Right cardiac atrium (tissue), 5 donors: ENCODE measurements at regions of chr6 and their contacts with region 1.

Region 1: GRCh38 chr6:79672631-79673111 is 41.5 kb downstream of the SH3BGRL2 start:
- DNase-seq: no peak
- ATAC-seq: peak in 1 of 2 donors; percentile 24
- H3K4me3 ChIP-seq: no peak overlapping the region
- H3K27ac ChIP-seq: no peak overlapping the region
- H3K4me1 ChIP-seq: peaks cover 2% of the 10 kb centered on the region
- H3K27me3 ChIP-seq: no peaks in the 10 kb centered on the region

Region 2: GRCh38 chr6:79453558-79454042 is 219.1 kb before region 1 on chr6:
- intact Hi-C with region 1: no loop called
- DNase-seq: no peak
- ATAC-seq: peak; percentile 65 to 68
- H3K4me3 ChIP-seq: no peak overlapping the region
- H3K27ac ChIP-seq: no peak overlapping the region
- H3K4me1 ChIP-seq: no peaks in the 10 kb centered on the region
- H3K27me3 ChIP-seq: no peaks in the 10 kb centered on the region

Region 3: GRCh38 chr6:79564636-79565035 is 108.0 kb before region 1 on chr6:
- intact Hi-C with region 1: loop called in 2 of 4 experiments (anchors 10 kb)
- DNase-seq: no peak
- ATAC-seq: no peak
- H3K4me3 ChIP-seq: no peak overlapping the region
- H3K27ac ChIP-seq: no peak overlapping the region
- H3K4me1 ChIP-seq: no peaks in the 10 kb centered on the region
- H3K27me3 ChIP-seq: no peaks in the 10 kb centered on the region

Region 4: DNA sequence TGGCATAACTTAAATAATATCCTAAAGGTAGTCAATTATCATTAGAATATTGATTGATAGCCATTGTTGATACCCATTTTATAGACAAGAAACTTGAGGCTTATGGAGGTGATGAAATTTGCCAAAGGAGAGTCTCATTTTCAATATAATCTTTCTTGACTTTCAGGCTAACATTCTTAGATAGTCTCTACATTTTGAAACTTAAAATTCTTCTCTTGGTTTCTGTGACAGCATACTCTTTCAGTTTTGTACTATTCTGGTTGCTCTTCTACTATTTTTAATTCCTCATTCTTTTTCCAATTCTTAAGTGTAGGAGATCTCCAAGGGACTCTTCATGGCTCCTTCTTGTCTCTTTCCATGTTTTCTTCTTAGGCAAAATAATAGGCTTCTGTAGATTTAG is 45.2 kb before region 1 on chr6:
- intact Hi-C with region 1: loop called in 1 of 4 experiments (anchors 10 kb)
- DNase-seq: no peak
- ATAC-seq: no peak
- H3K4me3 ChIP-seq: no peak overlapping the region
- H3K27ac ChIP-seq: no peak overlapping the region
- H3K4me1 ChIP-seq: no peaks in the 10 kb centered on the region
- H3K27me3 ChIP-seq: no peaks in the 10 kb centered on the region

Region 5: DNA sequence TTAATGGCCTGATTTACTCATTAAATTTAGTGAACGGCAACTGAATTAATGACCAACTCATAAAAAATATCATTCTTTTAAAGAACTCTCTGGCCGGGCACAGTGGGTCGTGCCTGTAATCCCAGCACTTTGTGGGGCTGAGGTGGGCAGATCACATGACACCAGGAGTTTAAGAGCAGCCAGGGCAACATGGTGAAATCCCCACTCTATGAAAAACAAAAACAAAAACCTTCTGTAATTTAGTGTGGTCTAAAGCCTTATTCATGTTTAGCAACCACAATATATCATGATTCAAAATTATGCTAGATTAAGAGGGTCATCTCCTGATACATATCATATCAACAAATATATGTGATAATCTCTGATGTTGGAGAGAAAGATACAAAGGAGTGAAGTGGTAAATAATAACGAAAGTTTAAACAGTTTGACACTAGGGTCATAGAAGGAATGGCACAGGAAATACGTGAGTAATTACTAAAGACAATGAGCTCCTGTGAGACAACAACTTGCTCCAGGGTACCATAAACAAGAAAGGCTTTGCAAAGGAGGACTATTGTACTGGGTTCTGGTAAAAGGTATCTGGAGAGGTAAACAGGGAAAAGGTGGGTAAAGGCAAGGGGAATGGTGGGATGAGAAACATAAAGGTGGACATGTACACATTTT is 268.9 kb after region 1 on chr6:
- intact Hi-C with region 1: no loop called
- DNase-seq: no peak
- ATAC-seq: no peak
- H3K4me3 ChIP-seq: no peak overlapping the region
- H3K27ac ChIP-seq: no peak overlapping the region
- H3K4me1 ChIP-seq: no peaks in the 10 kb centered on the region
- H3K27me3 ChIP-seq: no peaks in the 10 kb centered on the region